Activated CD8-positive, alpha-beta T cell treated with anti-CD3 and anti-CD28 coated beads for 36 hours (primary cell): ENCODE measurements at regions of chr4 and their contacts with region 1.

Region 1: DNA sequence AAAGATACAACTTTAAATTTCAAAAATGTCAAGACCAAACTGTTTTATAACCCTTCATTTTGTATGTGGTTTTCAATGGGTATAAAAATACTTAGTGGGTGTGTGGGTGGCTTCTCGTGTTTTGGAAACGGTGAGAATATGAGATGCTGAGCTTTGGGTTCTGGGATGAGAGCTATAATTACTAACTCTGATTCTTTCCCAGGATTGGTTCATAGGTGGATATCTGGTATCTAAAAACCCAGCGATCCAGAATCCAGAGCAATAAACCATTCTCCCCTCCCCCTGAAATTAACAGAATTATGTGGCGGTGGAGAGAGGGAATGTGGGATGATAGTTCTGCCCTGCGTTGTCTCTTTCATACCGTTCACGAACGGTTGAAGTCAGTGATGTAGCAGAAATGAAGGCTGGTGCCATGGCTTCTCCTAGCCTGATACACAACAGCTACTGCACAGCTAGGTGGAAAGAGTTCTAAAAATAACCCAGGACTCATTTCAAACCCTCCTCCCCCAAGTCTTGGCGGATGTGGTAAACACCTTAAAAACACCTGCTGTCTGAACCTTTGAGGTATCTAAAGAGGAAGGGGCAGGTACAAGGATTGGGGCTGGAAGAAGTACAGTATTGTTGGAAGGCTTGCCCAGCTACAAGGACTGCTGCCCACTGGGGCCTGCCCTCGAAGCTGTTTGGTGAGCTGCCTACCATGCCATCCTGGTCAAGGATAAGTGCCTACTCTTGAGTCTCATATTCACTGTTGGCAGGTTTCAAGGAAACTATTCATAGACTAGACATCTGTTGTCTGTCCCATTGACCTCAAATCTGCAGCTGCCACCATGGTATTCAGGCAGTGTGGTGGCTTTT is 44.5 kb downstream of the SEPTIN11 start:
- DNase-seq: peak; percentile 82
- ATAC-seq: peak; percentile 79
- H3K4me3 Mint-ChIP-seq: peak overlapping the region; percentile 44
- H3K27ac Mint-ChIP-seq: peak overlapping the region; percentile 85
- H3K4me1 Mint-ChIP-seq: peaks cover 60% of the 10 kb centered on the region
- H3K27me3 Mint-ChIP-seq: no peaks in the 10 kb centered on the region
- CTCF ChIP-seq: no peak

Region 2: DNA sequence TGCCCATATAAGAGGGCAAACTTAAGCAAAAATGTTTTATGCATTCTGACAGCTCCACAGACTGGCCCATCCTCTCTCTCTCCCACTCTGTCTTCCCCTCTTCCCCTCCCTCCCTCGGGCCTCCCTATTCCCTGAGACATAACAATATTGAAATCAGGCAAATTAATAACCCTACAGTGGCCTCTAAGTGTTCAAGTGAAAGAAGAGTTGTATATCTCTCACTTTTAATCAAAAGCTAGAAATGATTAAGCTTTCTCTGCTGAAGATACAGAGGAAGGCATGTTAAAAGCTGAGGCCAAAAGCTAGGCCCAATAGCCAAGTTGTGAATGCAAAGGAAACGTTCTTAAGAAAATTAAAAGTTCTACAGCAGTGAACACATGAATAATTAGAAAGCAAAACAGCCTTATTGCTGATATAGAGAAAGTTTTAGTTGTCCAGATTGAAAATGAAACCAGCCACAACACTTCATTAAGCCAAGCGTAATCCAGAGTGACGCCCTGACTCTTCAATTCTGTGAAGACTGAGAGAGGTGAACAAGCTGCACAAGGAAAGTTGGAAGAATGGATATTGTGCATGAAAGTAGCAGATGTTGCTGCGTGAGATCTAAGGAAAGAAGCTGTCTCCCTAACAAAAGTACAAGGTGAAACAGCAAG is 1214.8 kb before region 1 on chr4:
- CTCF ChIA-PET with region 1: no interaction called
- POLR2A ChIA-PET with region 1: no interaction called
- intact Hi-C with region 1: no loop called
- DNase-seq: no peak
- ATAC-seq: no peak
- H3K4me3 Mint-ChIP-seq: no peak overlapping the region
- H3K27ac Mint-ChIP-seq: peak overlapping the region; percentile 37
- H3K4me1 Mint-ChIP-seq: no peaks in the 10 kb centered on the region
- H3K27me3 Mint-ChIP-seq: no peaks in the 10 kb centered on the region
- CTCF ChIP-seq: no peak

Region 3: GRCh38 chr4:76463568-76463967 is 530.4 kb before region 1 on chr4:
- CTCF ChIA-PET with region 1: no interaction called
- POLR2A ChIA-PET with region 1: no interaction called
- intact Hi-C with region 1: no loop called
- DNase-seq: no peak
- ATAC-seq: no peak
- H3K4me3 Mint-ChIP-seq: no peak overlapping the region
- H3K27ac Mint-ChIP-seq: no peak overlapping the region
- H3K4me1 Mint-ChIP-seq: no peaks in the 10 kb centered on the region
- H3K27me3 Mint-ChIP-seq: peaks cover 2% of the 10 kb centered on the region
- CTCF ChIP-seq: no peak

Region 4: DNA sequence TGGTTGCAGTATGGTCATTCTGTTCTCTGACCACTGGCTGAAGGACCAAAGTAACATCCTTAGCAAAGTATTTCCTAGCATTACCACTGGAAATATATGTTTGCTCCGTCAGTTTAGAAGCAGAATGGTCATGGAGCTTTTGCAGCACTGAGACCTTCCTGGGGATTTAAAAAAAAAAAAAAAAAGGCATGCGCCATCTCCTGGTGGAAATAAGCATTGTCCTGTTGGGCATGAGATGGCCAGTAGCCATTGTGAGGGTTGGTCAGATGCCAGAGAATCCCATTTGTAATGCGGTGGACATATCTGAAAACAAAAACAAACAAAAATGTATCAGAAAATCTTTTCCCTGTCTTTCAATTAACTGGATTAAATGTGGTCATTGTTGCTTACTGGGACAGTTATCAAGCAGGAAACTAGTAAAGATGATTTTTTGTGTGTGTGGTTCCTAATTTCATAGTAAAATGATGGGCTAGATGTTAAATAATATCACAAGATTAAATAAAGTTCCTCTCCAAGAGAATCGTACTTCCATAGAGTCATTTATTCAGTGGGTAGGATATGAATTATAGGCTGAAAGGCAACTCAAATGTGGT is 235.6 kb before region 1 on chr4:
- CTCF ChIA-PET with region 1: no interaction called
- POLR2A ChIA-PET with region 1: no interaction called
- intact Hi-C with region 1: no loop called
- DNase-seq: no peak
- ATAC-seq: no peak
- H3K4me3 Mint-ChIP-seq: no peak overlapping the region
- H3K27ac Mint-ChIP-seq: no peak overlapping the region
- H3K4me1 Mint-ChIP-seq: peaks cover 9% of the 10 kb centered on the region
- H3K27me3 Mint-ChIP-seq: peaks cover 3% of the 10 kb centered on the region
- CTCF ChIP-seq: peak; percentile 78

Region 5: GRCh38 chr4:76949276-76950051 is 44.5 kb before region 1 on chr4 and contains the start of gene SEPTIN11:
- CTCF ChIA-PET with region 1: no interaction called
- POLR2A ChIA-PET with region 1: interaction called, 6 read pairs
- intact Hi-C with region 1: loop called (anchors 2 kb)
- DNase-seq: peak; percentile 91
- ATAC-seq: peak; percentile 77
- H3K4me3 Mint-ChIP-seq: peak within 1 kb of the TSS; percentile 88
- H3K27ac Mint-ChIP-seq: peak within 1 kb of the TSS; percentile 84
- H3K4me1 Mint-ChIP-seq: peaks cover 19% of the 10 kb centered on the region
- H3K27me3 Mint-ChIP-seq: peaks cover 2% of the 10 kb centered on the region
- CTCF ChIP-seq: no peak
- total RNA-seq, gene SEPTIN11: 38.6 to 43.3 TPM

Region 6: GRCh38 chr4:77025643-77026321 is 31.8 kb after region 1 on chr4:
- CTCF ChIA-PET with region 1: interaction called, 3 read pairs
- POLR2A ChIA-PET with region 1: interaction called, 3 read pairs
- intact Hi-C with region 1: loop called (anchors 1 kb)
- DNase-seq: peak; percentile 41
- ATAC-seq: peak; percentile 85
- H3K4me3 Mint-ChIP-seq: no peak overlapping the region
- H3K27ac Mint-ChIP-seq: peak overlapping the region; percentile 70
- H3K4me1 Mint-ChIP-seq: peaks cover 41% of the 10 kb centered on the region
- H3K27me3 Mint-ChIP-seq: no peaks in the 10 kb centered on the region
- CTCF ChIP-seq: no peak

Region 7: GRCh38 chr4:77203380-77204197 is 209.6 kb after region 1 on chr4:
- CTCF ChIA-PET with region 1: no interaction called
- POLR2A ChIA-PET with region 1: no interaction called
- intact Hi-C with region 1: no loop called
- DNase-seq: peak; percentile 82
- ATAC-seq: peak; percentile 70
- H3K4me3 Mint-ChIP-seq: no peak overlapping the region
- H3K27ac Mint-ChIP-seq: no peak overlapping the region
- H3K4me1 Mint-ChIP-seq: peaks cover 13% of the 10 kb centered on the region
- H3K27me3 Mint-ChIP-seq: peaks cover 5% of the 10 kb centered on the region
- CTCF ChIP-seq: peak; percentile 74